Activated CD8-positive, alpha-beta memory T cell treated with anti-CD3 and anti-CD28 coated beads, Interleukin-2, amount 10 ng/mL, durations not matched to agents 7 days and 5 days (primary cell): ENCODE measurements at regions of chr22 and their contacts with region 1.

Region 1: GRCh38 chr22:25057013-25057881 is 104.7 kb downstream of the KIAA1671 start:
- DNase-seq: peak; percentile 83
- ATAC-seq: peak; percentile 48
- H3K4me3 Mint-ChIP-seq: no peak overlapping the region
- H3K27ac Mint-ChIP-seq: no peak overlapping the region
- H3K4me1 Mint-ChIP-seq: peaks cover 48% of the 10 kb centered on the region
- H3K27me3 Mint-ChIP-seq: no peaks in the 10 kb centered on the region

Region 2: GRCh38 chr22:24938741-24939341 is 118.4 kb before region 1 on chr22:
- CTCF ChIA-PET with region 1: interaction called, 83 read pairs
- DNase-seq: peak; percentile 50
- ATAC-seq: peak; percentile 49
- H3K4me3 Mint-ChIP-seq: no peak overlapping the region
- H3K27ac Mint-ChIP-seq: no peak overlapping the region
- H3K4me1 Mint-ChIP-seq: no peaks in the 10 kb centered on the region
- H3K27me3 Mint-ChIP-seq: peaks cover 10% of the 10 kb centered on the region

Region 3: GRCh38 chr22:24961217-24961844 is 95.9 kb before region 1 on chr22:
- CTCF ChIA-PET with region 1: interaction called, 10 read pairs
- DNase-seq: no peak
- ATAC-seq: no peak
- H3K4me3 Mint-ChIP-seq: no peak overlapping the region
- H3K27ac Mint-ChIP-seq: no peak overlapping the region
- H3K4me1 Mint-ChIP-seq: peaks cover 3% of the 10 kb centered on the region
- H3K27me3 Mint-ChIP-seq: peaks cover 10% of the 10 kb centered on the region

Region 4: DNA sequence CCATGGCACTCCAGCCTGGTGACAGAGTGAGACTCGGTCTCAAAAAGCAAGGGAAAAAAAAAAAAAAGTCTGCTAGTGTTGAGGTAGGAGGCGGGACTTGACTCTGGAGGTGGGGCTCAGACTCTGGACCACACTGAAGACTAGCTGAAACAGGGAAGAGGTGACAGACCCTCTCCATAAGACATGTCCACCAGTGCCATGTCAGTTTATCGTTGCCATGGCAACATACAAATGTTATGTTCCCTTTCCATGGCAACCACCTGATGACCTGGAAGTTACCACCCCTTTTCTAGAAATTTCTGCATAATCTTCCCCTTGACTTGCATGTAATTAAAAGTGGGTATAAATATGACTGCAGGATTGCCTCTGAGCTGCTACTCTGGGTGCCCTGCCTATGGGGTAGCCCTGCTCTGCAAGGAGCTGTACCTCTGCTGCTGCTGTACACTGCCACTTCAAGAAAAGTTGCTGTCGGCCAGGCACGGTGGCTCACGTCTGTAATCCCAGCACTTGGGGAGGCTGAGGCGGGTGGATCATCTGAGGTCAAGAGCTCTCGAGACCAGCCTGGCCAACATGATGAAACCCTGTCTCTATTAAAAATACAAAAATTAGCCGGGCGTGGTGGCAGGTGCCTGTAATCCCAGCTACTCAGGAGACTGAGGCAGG is 49.7 kb before region 1 on chr22:
- CTCF ChIA-PET with region 1: no interaction called
- DNase-seq: no peak
- ATAC-seq: peak; percentile 39
- H3K4me3 Mint-ChIP-seq: no peak overlapping the region
- H3K27ac Mint-ChIP-seq: no peak overlapping the region
- H3K4me1 Mint-ChIP-seq: peaks cover 8% of the 10 kb centered on the region
- H3K27me3 Mint-ChIP-seq: no peaks in the 10 kb centered on the region

Region 5: DNA sequence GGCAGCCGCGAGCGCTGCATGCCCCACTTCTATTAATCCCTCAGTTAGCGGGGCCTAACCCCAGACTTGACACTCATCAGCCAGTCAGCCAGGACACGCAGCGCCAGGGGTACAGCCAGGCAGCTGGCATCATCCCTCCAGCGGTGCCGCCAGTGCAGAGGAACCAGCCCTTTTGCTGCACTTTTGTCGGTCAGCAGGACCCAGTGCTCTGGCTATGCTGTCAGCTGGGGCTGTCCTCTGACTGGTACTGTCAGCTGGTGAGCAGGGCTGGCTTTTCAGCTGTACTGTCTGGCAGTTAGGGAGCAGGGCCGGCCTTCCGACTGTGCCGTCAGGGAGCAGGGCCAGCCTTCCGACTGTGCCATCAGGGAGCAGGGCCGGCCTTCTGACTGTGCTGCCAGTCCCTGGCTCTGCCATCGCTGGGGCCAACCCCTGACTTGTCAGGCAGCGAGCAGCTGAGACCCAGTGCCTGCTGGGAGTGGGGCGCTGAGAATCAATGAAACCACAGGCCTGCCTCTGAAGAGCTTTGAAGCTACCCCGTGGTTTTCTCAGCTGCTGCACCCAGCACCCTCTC is 10.7 kb after region 1 on chr22:
- CTCF ChIA-PET with region 1: interaction called, 85 read pairs
- DNase-seq: peak; percentile 93
- ATAC-seq: peak; percentile 83
- H3K4me3 Mint-ChIP-seq: peak overlapping the region; percentile 81
- H3K27ac Mint-ChIP-seq: peak overlapping the region; percentile 88
- H3K4me1 Mint-ChIP-seq: peaks cover 64% of the 10 kb centered on the region
- H3K27me3 Mint-ChIP-seq: no peaks in the 10 kb centered on the region

Region 6: GRCh38 chr22:25076336-25076735 is 19.1 kb after region 1 on chr22:
- CTCF ChIA-PET with region 1: interaction called, 85 read pairs
- DNase-seq: peak; percentile 73
- ATAC-seq: peak; percentile 75
- H3K4me3 Mint-ChIP-seq: peak overlapping the region; percentile 56
- H3K27ac Mint-ChIP-seq: peak overlapping the region; percentile 84
- H3K4me1 Mint-ChIP-seq: peaks cover 75% of the 10 kb centered on the region
- H3K27me3 Mint-ChIP-seq: no peaks in the 10 kb centered on the region

Region 7: GRCh38 chr22:25081409-25081824 is 24.2 kb after region 1 on chr22:
- CTCF ChIA-PET with region 1: interaction called, 20 read pairs
- DNase-seq: peak; percentile 72
- ATAC-seq: peak; percentile 29
- H3K4me3 Mint-ChIP-seq: no peak overlapping the region
- H3K27ac Mint-ChIP-seq: peak overlapping the region; percentile 45
- H3K4me1 Mint-ChIP-seq: peaks cover 76% of the 10 kb centered on the region
- H3K27me3 Mint-ChIP-seq: no peaks in the 10 kb centered on the region